ENCODE measurements at regions of chr3 and their contacts with region 1.

Region 1: GRCh38 chr3:87298111-87298718 is 21.8 kb upstream of the POU1F1 start:
- DNase-seq: no peak
- H3K4me3 Mint-ChIP-seq: no peak overlapping the region
- H3K27ac Mint-ChIP-seq: no peak overlapping the region
- H3K4me1 Mint-ChIP-seq: no peaks in the 10 kb centered on the region
- H3K27me3 Mint-ChIP-seq: no peaks in the 10 kb centered on the region

Region 2: DNA sequence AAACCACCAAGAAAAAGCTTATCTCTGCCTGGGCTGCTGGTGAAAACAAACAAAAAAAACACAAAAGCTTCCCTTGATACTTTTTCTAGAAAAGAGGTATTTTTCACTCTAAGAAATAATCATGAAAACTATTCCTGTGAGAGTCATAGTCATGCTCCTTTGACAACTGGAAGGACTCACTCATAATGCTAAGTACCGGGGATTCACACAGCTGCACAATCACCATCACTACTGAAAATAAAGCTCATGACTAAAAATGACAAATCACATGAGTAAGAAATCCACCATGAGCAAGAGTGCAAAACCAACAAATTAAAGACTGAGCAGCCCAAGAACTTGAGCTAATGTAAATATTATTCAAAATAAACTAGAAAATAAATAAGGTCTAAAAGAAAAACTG is 11.2 kb before region 1 on chr3:
- CTCF ChIA-PET with region 1: interaction called, 16 read pairs
- DNase-seq: no peak
- H3K4me3 Mint-ChIP-seq: no peak overlapping the region
- H3K27ac Mint-ChIP-seq: no peak overlapping the region
- H3K4me1 Mint-ChIP-seq: no peaks in the 10 kb centered on the region
- H3K27me3 Mint-ChIP-seq: no peaks in the 10 kb centered on the region

Measured in activated naive CD4-positive, alpha-beta T cell treated with anti-CD3 and anti-CD28 coated beads, Interleukin-2, amount 10 ng/mL, durations not matched to agents 7 days and 5 days (primary cell).